ENCODE measurements at regions of chr3 and their contacts with region 1.

Region 1: GRCh38 chr3:12193485-12194165 is 34.9 kb upstream of the TIMP4 start:
- DNase-seq: peak; percentile 95 to 99 (median 97)
- H3K4me3 ChIP-seq: peak overlapping the region in 1 of 3 experiments; percentile 41
- H3K4me3 Mint-ChIP-seq: peak overlapping the region; percentile 8 to 64
- H3K27ac ChIP-seq: peak overlapping the region; percentile 74 to 95
- H3K27ac Mint-ChIP-seq: peak overlapping the region; percentile 97 to 99 (median 97)
- H3K4me1 ChIP-seq: peaks cover 73 to 76% of the 10 kb centered on the region in 2 donors
- H3K4me1 Mint-ChIP-seq: peaks cover 73% of the 10 kb centered on the region
- H3K27me3 ChIP-seq: no peaks in the 10 kb centered on the region
- H3K27me3 Mint-ChIP-seq: peaks cover 0 to 5% (median 0%) of the 10 kb centered on the region in 3 donors
- CTCF ChIP-seq: no peak

Region 2: DNA sequence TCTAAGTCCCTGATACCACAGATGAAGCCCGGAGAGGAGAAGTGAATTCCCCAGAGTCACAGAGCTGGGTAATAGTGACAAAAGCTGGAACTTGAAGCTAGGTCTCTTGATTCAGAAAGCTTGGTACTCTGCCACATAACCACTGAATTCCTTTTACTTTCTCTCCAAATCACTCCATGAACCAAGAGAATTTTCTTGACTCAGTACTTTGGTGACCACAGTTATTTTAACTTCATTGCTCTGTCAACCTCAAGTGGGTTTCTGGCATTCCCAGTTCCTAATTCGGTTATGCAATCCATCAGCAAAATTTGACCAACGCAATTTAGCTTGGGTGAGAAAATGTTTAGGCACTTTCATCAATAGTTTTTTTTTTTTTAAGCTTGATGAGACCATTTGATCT is 34.2 kb after region 1 on chr3:
- intact Hi-C with region 1: no loop called
- DNase-seq: peak in 1 of 3 donors; percentile 12
- H3K4me3 ChIP-seq: no peak overlapping the region
- H3K4me3 Mint-ChIP-seq: no peak overlapping the region
- H3K27ac ChIP-seq: no peak overlapping the region
- H3K27ac Mint-ChIP-seq: no peak overlapping the region
- H3K4me1 ChIP-seq: peaks cover 44 to 45% of the 10 kb centered on the region in 2 donors
- H3K4me1 Mint-ChIP-seq: peaks cover 57% of the 10 kb centered on the region
- H3K27me3 ChIP-seq: no peaks in the 10 kb centered on the region
- H3K27me3 Mint-ChIP-seq: no peaks in the 10 kb centered on the region
- CTCF ChIP-seq: no peak

Region 3: DNA sequence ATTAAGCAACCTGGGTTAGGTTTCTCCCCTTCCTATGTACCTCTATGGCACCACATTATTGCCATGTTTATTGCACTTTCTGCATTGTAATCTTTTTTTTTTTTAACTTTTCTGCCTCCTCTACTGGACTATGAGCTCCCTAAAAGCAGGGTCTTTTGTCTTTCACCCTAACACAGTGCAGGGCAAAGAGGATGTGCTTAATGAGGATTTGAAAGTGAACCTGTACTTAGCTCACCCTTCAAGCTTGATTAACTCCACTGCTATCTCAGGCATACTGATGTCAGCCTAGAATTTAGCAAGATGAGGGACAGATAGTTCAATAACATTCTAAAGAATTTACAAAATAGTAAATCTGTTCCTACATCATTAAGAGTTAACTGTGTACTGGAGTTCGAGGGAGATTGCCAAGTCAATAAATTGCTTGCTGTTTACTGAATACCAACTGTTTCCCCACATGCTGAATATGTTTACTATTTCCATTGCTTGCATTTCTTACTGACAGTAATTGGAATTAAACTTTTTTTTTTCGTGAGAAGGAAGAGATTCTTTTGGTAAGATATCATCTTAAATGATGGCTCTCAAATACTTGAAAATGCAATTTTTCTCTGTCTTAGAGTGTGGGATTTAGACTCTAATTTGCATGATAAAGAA is 79.5 kb after region 1 on chr3:
- intact Hi-C with region 1: no loop called
- DNase-seq: no peak
- H3K4me3 ChIP-seq: no peak overlapping the region
- H3K4me3 Mint-ChIP-seq: no peak overlapping the region
- H3K27ac ChIP-seq: no peak overlapping the region
- H3K27ac Mint-ChIP-seq: no peak overlapping the region
- H3K4me1 ChIP-seq: peaks cover 35 to 42% of the 10 kb centered on the region in 2 donors
- H3K4me1 Mint-ChIP-seq: peaks cover 41% of the 10 kb centered on the region
- H3K27me3 ChIP-seq: no peaks in the 10 kb centered on the region
- H3K27me3 Mint-ChIP-seq: peaks cover 0 to 1% (median 0%) of the 10 kb centered on the region in 3 donors
- CTCF ChIP-seq: no peak

Region 4: GRCh38 chr3:12287727-12288191 is 94.1 kb after region 1 on chr3:
- intact Hi-C with region 1: loop called in 1 of 2 experiments (anchors 5 kb)
- DNase-seq: peak; percentile 47 to 60 (median 54)
- H3K4me3 ChIP-seq: peak overlapping the region; percentile 50 to 80 (median 78)
- H3K4me3 Mint-ChIP-seq: peak overlapping the region; percentile 85 to 88
- H3K27ac ChIP-seq: peak overlapping the region in 1 of 2 donors; percentile 61
- H3K27ac Mint-ChIP-seq: peak overlapping the region in 6 of 7 donors; percentile 70 to 96 (median 77)
- H3K4me1 ChIP-seq: peaks cover 16 to 17% of the 10 kb centered on the region in 2 donors
- H3K4me1 Mint-ChIP-seq: peaks cover 18% of the 10 kb centered on the region
- H3K27me3 ChIP-seq: peaks cover 20 to 32% of the 10 kb centered on the region in 2 donors
- H3K27me3 Mint-ChIP-seq: peaks cover 38 to 52% (median 38%) of the 10 kb centered on the region in 3 donors
- CTCF ChIP-seq: no peak

Region 5: DNA sequence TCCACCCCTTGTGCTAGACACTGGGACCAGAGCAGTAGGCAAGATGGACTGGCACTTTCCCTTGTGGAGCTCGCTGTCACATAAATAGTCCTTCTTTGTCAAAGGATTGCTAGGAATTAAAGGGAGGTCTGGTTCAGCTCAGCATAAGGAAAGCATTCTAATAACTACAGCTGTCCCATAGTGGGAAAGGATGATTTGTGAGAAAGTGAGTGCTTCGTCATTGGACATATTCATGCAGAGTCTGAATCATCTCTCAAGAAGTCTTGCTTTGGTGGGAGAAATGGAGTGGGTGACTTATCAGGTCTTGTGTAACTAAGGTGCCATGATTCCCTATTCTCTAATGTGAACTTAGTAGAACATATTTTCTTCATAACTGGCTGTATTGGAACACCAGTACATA is 109.9 kb after region 1 on chr3:
- intact Hi-C with region 1: loop called in 1 of 2 experiments (anchors 5 kb)
- DNase-seq: peak; percentile 87 to 97 (median 95)
- H3K4me3 ChIP-seq: no peak overlapping the region
- H3K4me3 Mint-ChIP-seq: no peak overlapping the region
- H3K27ac ChIP-seq: peak overlapping the region; percentile 81 to 90
- H3K27ac Mint-ChIP-seq: peak overlapping the region; percentile 85 to 98 (median 94)
- H3K4me1 ChIP-seq: peaks cover 17 to 20% of the 10 kb centered on the region in 2 donors
- H3K4me1 Mint-ChIP-seq: peaks cover 37% of the 10 kb centered on the region
- H3K27me3 ChIP-seq: no peaks in the 10 kb centered on the region
- H3K27me3 Mint-ChIP-seq: peaks cover 0 to 10% (median 0%) of the 10 kb centered on the region in 3 donors
- CTCF ChIP-seq: no peak

Region 6: DNA sequence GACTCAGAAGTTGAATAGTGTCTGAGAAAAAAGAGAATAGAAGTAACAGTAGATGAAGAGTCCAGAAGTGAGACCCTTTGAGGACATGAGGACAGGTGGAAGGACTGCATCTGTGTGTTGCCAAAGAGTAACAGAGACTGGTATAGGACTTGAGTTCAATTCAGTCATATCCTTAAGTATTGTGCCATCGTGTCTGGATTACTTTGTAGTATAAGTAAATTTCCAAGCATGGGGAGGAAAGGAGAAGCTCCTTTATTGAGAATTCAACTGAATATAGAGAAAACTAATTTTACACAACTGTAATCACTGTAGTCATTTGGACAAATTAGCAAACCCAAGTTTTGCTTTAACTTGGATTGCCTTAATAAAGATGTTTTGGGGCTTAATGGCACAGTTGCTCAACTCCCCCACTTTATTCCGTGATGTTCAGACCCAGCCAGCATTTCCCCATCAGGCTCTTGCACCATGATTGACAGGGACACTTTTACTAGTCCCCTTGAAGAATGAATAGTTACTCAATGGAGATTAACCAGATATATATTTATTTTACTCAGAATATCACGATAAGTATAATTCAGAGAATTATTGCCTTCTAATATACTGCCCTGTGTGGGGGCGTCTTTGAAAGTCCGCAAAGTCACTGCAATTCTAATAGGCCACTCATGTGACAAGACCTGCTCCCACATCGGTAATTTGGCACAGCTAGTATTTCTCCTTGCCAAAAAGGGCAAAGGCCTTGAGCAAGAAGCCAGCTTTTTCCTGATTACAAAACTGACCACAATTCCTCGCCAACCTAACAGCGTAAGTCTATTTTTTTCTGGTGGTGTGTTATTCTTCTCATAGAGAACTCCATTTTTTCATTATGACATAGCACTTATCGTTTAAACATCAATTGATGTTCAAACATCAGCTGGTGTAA is 156.5 kb after region 1 on chr3:
- intact Hi-C with region 1: loop called in 1 of 2 experiments (anchors 5 kb)
- DNase-seq: peak; percentile 66 to 88 (median 74)
- H3K4me3 ChIP-seq: no peak overlapping the region
- H3K4me3 Mint-ChIP-seq: no peak overlapping the region
- H3K27ac ChIP-seq: peak overlapping the region; percentile 6 to 52
- H3K27ac Mint-ChIP-seq: peak overlapping the region; percentile 84 to 93 (median 89)
- H3K4me1 ChIP-seq: peaks cover 55 to 62% of the 10 kb centered on the region in 2 donors
- H3K4me1 Mint-ChIP-seq: peaks cover 63% of the 10 kb centered on the region
- H3K27me3 ChIP-seq: no peaks in the 10 kb centered on the region
- H3K27me3 Mint-ChIP-seq: peaks cover 0 to 2% (median 0%) of the 10 kb centered on the region in 3 donors
- CTCF ChIP-seq: no peak

Region 7: GRCh38 chr3:12454076-12454815 is 260.6 kb after region 1 on chr3:
- intact Hi-C with region 1: loop called in 1 of 2 experiments (anchors 5 kb)
- DNase-seq: peak in 2 of 3 donors; percentile 27 to 46
- H3K4me3 ChIP-seq: no peak overlapping the region
- H3K4me3 Mint-ChIP-seq: no peak overlapping the region
- H3K27ac ChIP-seq: peak overlapping the region in 1 of 2 donors; percentile 9
- H3K27ac Mint-ChIP-seq: peak overlapping the region in 5 of 7 donors; percentile 16 to 84 (median 42)
- H3K4me1 ChIP-seq: peaks cover 24 to 40% of the 10 kb centered on the region in 2 donors
- H3K4me1 Mint-ChIP-seq: peaks cover 42% of the 10 kb centered on the region
- H3K27me3 ChIP-seq: no peaks in the 10 kb centered on the region
- H3K27me3 Mint-ChIP-seq: peaks cover 0 to 7% (median 2%) of the 10 kb centered on the region in 3 donors
- CTCF ChIP-seq: no peak

Region 8: GRCh38 chr3:12471243-12471651 is 277.6 kb after region 1 on chr3:
- intact Hi-C with region 1: no loop called
- DNase-seq: peak in 2 of 3 donors; percentile 31 to 74
- H3K4me3 ChIP-seq: no peak overlapping the region
- H3K4me3 Mint-ChIP-seq: no peak overlapping the region
- H3K27ac ChIP-seq: no peak overlapping the region
- H3K27ac Mint-ChIP-seq: peak overlapping the region in 2 of 7 donors; percentile 26 to 38
- H3K4me1 ChIP-seq: peaks cover 0 to 3% of the 10 kb centered on the region in 2 donors
- H3K4me1 Mint-ChIP-seq: peaks cover 11% of the 10 kb centered on the region
- H3K27me3 ChIP-seq: no peaks in the 10 kb centered on the region
- H3K27me3 Mint-ChIP-seq: peaks cover 0 to 5% (median 0%) of the 10 kb centered on the region in 3 donors
- CTCF ChIP-seq: no peak